Astrocyte of the cerebellum (primary cell): ENCODE measurements at regions of chr19 and their contacts with region 1.

Region 1: DNA sequence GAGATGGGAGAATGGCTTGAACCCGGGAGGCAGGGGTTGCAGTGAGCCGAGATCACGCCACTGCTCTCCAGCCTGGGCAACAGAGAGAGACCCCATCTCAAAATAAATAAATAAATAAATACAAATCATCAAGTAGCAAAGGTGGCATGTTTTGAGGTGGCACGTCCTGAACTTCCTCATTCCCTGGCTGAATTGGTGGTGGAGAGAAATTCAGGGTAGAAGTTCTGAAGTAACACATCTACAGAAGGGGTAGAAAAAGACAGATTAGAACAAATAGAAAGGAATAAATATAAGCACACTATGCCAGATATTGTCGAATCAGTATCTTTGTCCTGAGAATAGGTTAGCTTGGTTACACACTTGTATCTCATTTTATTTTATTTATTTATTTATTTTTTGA is 6.3 kb downstream of the IFI30 start:
- DNase-seq: no peak
- H3K4me3 ChIP-seq: no peak overlapping the region
- CTCF ChIP-seq: no peak

Region 2: DNA sequence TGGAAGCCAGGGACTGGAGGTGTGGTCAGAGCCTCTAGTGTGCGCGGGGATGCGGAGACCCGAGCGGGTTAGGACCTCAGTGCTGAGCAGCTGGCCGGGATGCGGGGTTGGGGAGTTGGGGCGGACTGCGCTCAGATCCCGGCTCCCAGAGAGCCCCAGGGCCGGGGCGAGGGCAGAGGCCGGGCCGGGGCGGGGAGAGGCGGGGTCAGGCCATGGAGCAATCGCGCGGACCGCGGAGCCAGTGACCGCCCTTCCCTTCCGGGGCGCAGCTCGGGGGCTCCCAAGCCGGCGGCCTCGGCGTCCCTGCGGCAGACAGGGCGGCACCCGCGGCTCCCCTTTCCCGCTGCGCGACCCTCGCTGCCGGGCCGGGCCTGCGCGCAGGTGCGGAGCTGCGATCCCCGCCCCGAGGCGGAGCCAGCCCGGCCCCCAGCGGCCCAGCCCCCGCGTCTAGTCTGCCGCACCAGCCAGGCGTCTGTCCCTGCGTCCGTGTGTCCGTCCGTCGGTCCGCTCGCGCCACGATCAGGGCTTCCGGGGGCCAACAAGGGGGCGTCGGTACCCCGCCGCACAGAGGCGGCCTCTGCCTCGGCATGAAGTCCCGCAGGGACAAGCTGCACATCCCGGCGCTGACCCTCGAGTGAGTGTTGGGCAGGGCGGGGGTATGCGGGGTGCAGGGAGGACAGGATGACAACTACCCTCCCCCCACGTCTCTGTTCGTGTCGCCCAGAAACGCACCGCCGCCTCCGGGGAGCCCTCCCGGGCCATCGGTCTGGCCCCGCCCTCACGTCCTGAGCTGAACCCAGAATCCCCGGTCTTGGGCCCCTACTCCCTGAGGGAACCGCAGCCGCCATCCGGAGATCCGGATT is 70.0 kb before region 1 on chr19:
- in situ Hi-C with region 1: loop called (anchors 10 kb)
- DNase-seq: no peak
- H3K4me3 ChIP-seq: peak overlapping the region; percentile 57
- CTCF ChIP-seq: no peak

Region 3: GRCh38 chr19:18128044-18128443 is 51.9 kb before region 1 on chr19:
- in situ Hi-C with region 1: no loop called
- DNase-seq: no peak
- H3K4me3 ChIP-seq: no peak overlapping the region
- CTCF ChIP-seq: no peak

Region 4: GRCh38 chr19:18259893-18260292 is 79.9 kb after region 1 on chr19:
- in situ Hi-C with region 1: loop called (anchors 5 kb)
- DNase-seq: no peak
- H3K4me3 ChIP-seq: no peak overlapping the region
- CTCF ChIP-seq: no peak